ENCODE measurements at regions of chr22 and their contacts with region 1.

Region 1: GRCh38 chr22:25048659-25049647 is 96.4 kb downstream of the KIAA1671 start:
- DNase-seq: peak; percentile 65 to 80 (median 76)
- ATAC-seq: peak; percentile 86 to 94 (median 91)
- H3K4me3 ChIP-seq: no peak overlapping the region
- H3K27ac ChIP-seq: no peak overlapping the region
- H3K4me1 ChIP-seq: peaks cover 0 to 5% (median 2%) of the 10 kb centered on the region in 4 donors
- H3K27me3 ChIP-seq: no peaks in the 10 kb centered on the region
- CTCF ChIP-seq: peak; percentile 89 to 94 (median 90)
- POLR2A ChIP-seq: no peak

Region 2: GRCh38 chr22:24938741-24939341 is 110.1 kb before region 1 on chr22:
- intact Hi-C with region 1: loop called in 1 of 2 experiments (anchors 5 kb)
- DNase-seq: no peak
- ATAC-seq: peak; percentile 77 to 88 (median 82)
- H3K4me3 ChIP-seq: no peak overlapping the region
- H3K27ac ChIP-seq: no peak overlapping the region
- H3K4me1 ChIP-seq: no peaks in the 10 kb centered on the region
- H3K27me3 ChIP-seq: no peaks in the 10 kb centered on the region
- CTCF ChIP-seq: peak; percentile 70 to 78 (median 74)
- POLR2A ChIP-seq: no peak

Region 3: GRCh38 chr22:24951942-24952836 is 96.8 kb before region 1 on chr22 and contains the start of gene KIAA1671:
- intact Hi-C with region 1: loop called (anchors 5 kb)
- DNase-seq: peak; percentile 95 to 97 (median 96)
- ATAC-seq: peak; percentile 90 to 95 (median 93)
- H3K4me3 ChIP-seq: peak within 1 kb of the TSS; percentile 70 to 77 (median 74)
- H3K27ac ChIP-seq: peak within 1 kb of the TSS; percentile 41 to 84 (median 66)
- H3K4me1 ChIP-seq: peaks cover 0 to 11% (median 4%) of the 10 kb centered on the region in 4 donors
- H3K27me3 ChIP-seq: no peaks in the 10 kb centered on the region
- CTCF ChIP-seq: peak; percentile 97 to 99 (median 98)
- POLR2A ChIP-seq: peak; percentile 81
- total RNA-seq, gene KIAA1671: 31.1 to 56.6 (median 39.2) TPM

Measured in right lobe of liver (tissue), 6 donors.